WTC11 (cell line): ENCODE measurements at regions of chr1 and their contacts with region 1.

Region 1: DNA sequence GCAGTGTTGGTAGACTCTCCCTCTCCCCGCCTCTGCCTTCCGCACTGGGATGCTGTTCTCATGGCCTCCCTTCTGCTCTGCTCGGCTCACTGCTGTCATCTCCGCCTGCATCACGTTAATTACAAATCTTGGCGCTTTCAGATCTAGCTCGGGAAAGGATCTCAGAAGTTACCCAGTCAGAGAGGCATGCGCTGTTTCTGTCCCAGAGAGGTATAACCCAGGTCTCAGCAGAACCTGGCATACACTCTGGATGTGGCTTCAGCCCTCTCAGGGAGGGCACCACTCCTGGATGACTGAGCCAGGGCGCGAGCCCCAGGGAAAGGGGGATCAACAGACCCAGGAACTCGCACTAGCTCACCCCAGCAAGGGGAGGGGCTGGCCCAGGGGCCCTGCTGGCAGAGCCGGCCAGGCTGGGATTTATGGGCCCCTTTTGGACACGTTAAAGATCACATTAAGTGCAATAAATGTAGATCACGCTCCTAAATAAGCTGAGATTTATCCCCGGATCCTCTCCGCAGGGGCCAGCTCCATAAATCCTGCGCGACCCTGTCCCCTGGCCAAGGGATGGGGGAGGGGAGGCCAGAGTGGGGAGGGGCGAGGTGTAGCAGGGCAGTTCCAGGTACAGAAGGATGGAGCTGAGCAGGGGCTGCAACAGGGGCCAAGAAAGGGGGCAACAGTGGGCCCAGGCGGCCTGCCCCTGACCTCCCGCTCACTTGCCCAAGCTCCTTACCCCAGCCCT is 101.3 kb upstream of the ZBTB40 start:
- DNase-seq: peak; percentile 50
- ATAC-seq: peak; percentile 73
- H3K4me3 Mint-ChIP-seq: peak overlapping the region; percentile 64
- H3K27ac Mint-ChIP-seq: no peak overlapping the region
- H3K4me1 Mint-ChIP-seq: peaks cover 28% of the 10 kb centered on the region
- H3K27me3 Mint-ChIP-seq: peaks cover 4% of the 10 kb centered on the region; the same call in 1 of the 2 replicates
- CTCF ChIP-seq: no peak

Region 2: DNA sequence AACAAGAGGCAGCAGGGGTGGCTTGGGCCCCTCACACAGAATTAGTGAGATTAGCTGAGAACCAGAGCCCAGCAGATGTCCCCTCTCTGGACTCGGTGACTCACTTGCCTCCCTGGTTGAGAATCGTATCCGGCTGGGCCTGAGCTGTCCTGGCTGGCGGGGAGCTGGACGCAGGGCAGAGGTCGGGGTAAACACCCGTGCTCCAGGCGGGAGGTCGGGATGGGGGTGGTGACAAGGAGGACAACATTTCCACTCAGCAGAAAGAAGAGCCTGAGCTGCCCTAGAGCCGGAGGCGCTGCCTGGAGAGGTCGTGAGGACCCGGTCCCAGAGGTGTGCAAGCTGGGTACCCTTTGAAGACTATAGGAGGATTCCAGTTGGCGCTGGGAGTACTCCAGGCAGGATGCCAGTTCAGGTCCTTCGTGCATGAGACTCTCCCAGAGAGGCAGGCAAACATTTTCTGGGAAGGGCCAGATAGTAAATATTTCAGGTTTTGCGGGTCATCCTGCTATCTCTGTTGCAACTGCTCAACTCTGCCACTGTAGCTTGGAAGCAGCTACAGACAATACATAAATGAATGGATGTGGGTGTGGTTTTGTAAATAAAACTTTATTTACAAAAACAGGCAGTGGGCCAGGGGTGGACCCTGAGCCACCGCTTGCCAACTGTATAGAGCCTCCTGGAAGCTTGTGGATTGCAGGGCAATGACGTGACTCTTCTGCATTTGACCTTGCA is 90.6 kb before region 1 on chr1:
- CTCF ChIA-PET with region 1: no interaction called
- POLR2A ChIA-PET with region 1: no interaction called
- DNase-seq: no peak
- ATAC-seq: no peak
- H3K4me3 Mint-ChIP-seq: no peak overlapping the region
- H3K27ac Mint-ChIP-seq: no peak overlapping the region
- H3K4me1 Mint-ChIP-seq: peaks cover 53% of the 10 kb centered on the region
- H3K27me3 Mint-ChIP-seq: no peaks in the 10 kb centered on the region; the same call in 1 of the 2 replicates
- CTCF ChIP-seq: no peak

Region 3: GRCh38 chr1:22364764-22365163 is 14.4 kb after region 1 on chr1:
- CTCF ChIA-PET with region 1: interaction called, 10 read pairs
- POLR2A ChIA-PET with region 1: interaction called, 4 read pairs
- DNase-seq: peak; percentile 39
- ATAC-seq: peak; percentile 97
- H3K4me3 Mint-ChIP-seq: no peak overlapping the region
- H3K27ac Mint-ChIP-seq: no peak overlapping the region
- H3K4me1 Mint-ChIP-seq: peaks cover 17% of the 10 kb centered on the region
- H3K27me3 Mint-ChIP-seq: no peaks in the 10 kb centered on the region; the same call in 1 of the 2 replicates
- CTCF ChIP-seq: no peak